RWPE1 (cell line): ENCODE measurements at regions of chr11 and their contacts with region 1.

Region 1: DNA sequence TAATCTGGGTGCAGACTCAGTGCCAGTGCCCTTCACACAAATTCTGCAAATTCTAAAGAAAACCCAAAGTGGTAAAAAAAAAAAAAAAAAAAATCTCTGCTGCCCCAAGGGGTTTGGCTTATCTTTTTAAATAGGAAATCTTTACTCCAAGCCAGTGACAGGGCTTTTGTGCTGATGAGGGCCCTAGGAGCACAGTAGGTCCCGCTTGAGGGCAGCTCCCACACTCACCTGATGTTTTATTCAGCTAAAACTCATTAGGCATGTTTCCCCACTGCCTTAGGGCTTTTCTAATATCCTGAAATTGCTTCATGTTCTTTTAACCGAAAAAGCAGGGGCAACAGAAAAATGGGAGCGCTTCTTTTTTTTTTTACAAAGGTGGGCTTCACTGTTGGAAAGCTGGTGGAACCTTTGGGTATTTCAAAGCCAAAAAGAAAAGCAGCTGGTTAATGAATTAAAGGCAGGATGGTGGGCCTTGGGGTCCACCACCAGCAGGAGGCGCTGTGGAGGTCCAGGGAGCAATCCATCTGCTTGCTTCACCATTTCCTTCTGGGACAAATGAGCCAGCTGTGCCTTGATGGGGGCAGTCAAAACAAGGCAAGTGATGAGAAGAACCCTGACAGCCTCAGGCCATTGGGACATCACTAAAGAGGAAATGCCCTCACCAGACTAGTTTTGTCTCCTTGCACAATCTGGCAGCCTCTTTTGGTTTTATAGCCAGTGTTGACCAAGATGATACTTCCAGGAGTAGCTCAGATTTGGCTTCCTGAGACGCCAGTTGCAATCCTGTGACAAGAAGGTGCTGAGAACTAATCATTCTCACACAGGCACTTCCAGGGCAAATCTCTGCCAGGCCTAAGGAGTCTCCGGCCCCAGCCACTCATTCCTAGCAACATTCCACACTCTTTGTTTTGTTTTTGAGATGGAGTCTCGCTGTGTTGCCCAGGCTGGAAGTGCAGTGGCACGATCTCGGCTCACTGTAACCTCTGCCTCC is 38.4 kb upstream of the WEE1 start:
- DNase-seq: no peak
- H3K27ac ChIP-seq: peak overlapping the region; percentile 24
- CTCF ChIP-seq: peak; percentile 52

Region 2: DNA sequence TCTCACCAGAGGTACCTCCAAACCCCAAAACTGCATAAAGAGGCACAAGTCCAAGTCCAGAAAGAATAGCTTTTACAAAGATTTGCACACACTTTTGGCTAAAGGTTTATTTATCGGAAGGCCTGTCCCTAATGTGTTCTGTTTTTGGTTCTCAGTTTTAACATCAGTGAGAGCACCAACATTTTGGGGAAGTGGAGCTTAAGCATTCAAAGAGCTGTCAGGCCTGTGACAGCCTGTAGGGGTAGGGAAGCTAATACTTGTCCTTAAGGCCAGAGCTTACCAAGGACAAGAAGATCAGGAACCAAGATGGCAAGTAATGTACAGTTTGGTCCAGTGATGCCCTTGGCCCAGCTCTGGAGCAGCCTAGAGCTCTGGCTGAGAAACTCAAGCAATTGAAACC is 404.8 kb before region 1 on chr11:
- CTCF ChIA-PET with region 1: no interaction called
- POLR2A ChIA-PET with region 1: no interaction called
- DNase-seq: no peak
- H3K27ac ChIP-seq: no peak overlapping the region
- CTCF ChIP-seq: no peak

Region 3: GRCh38 chr11:9562728-9563115 is 27.6 kb after region 1 on chr11:
- CTCF ChIA-PET with region 1: interaction called, 10 read pairs
- POLR2A ChIA-PET with region 1: no interaction called
- DNase-seq: no peak
- H3K27ac ChIP-seq: no peak overlapping the region
- CTCF ChIP-seq: no peak

Region 4: GRCh38 chr11:9575260-9576240 is 40.5 kb after region 1 on chr11:
- CTCF ChIA-PET with region 1: interaction called, 11 read pairs
- POLR2A ChIA-PET with region 1: no interaction called
- DNase-seq: peak; percentile 62
- H3K27ac ChIP-seq: peak overlapping the region; percentile 97
- CTCF ChIP-seq: no peak